ENCODE measurements at regions of chr3 and their contacts with region 1.

Region 1: DNA sequence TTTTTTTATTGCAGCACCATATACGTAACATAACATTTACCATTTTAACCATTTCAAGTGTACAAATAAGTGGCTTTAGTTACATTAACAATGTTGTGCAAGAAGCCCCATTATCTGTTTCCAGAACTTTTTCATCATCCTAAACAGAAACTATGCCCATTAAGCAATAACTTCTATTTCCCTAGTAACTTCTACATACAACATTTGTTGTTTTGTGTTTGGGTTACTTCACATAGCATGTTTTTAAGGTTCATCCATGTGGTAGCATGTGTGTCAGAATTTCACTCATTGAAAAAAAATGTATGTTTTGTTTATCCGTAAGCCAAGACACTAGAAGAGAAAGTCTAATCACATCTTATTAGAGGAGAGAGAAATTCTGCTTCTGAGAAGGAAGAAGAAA is 450.5 kb upstream of the PDZRN3 start:
- DNase-seq: no peak
- ATAC-seq: no peak
- H3K4me3 ChIP-seq: no peak overlapping the region
- H3K27ac ChIP-seq: no peak overlapping the region
- H3K4me1 ChIP-seq: no peaks in the 10 kb centered on the region
- H3K27me3 ChIP-seq: no peaks in the 10 kb centered on the region
- CTCF ChIP-seq: no peak
- EP300 ChIP-seq: no peak
- POLR2A ChIP-seq: no peak
- RAD21 ChIP-seq: no peak

Region 2: GRCh38 chr3:73206022-73206421 is 869.2 kb before region 1 on chr3:
- CTCF ChIA-PET with region 1: no interaction called
- POLR2A ChIA-PET with region 1: no interaction called
- RAD21 ChIA-PET with region 1: no interaction called
- SMC1A ChIA-PET with region 1: no interaction called
- in situ Hi-C with region 1: no loop called
- intact Hi-C with region 1: loop called (anchors 5 kb)
- DNase-seq: no peak
- ATAC-seq: no peak
- H3K4me3 ChIP-seq: no peak overlapping the region
- H3K27ac ChIP-seq: no peak overlapping the region
- H3K4me1 ChIP-seq: no peaks in the 10 kb centered on the region
- H3K27me3 ChIP-seq: peaks cover 0 to under 1% of the 10 kb centered on the region in 2 experiments; a peak in 2 of 4 replicates
- CTCF ChIP-seq: no peak
- EP300 ChIP-seq: no peak
- POLR2A ChIP-seq: no peak
- RAD21 ChIP-seq: no peak

Region 3: DNA sequence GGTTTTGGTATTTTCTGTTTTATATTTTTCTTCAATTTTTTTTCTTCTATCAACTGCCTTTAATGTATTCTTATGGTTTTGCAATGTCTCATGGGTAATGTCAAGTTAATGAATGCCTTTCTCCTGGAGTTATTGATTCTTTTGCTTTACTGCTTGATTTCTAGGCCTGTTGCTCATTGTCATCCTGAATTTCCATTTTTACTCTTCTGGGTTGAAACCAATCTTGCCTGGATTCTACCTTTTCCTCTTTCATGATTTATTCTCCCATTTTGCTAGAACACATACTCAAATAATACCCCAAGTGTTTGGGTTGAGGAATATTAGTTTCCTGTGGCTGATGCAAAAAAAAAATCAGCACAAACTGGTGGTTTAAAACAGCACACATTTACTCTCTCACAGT is 135.3 kb before region 1 on chr3:
- CTCF ChIA-PET with region 1: no interaction called
- POLR2A ChIA-PET with region 1: no interaction called
- RAD21 ChIA-PET with region 1: no interaction called
- SMC1A ChIA-PET with region 1: no interaction called
- in situ Hi-C with region 1: no loop called
- intact Hi-C with region 1: no loop called
- DNase-seq: no peak
- ATAC-seq: no peak
- H3K4me3 ChIP-seq: no peak overlapping the region
- H3K27ac ChIP-seq: no peak overlapping the region
- H3K4me1 ChIP-seq: no peaks in the 10 kb centered on the region
- H3K27me3 ChIP-seq: no peaks in the 10 kb centered on the region
- CTCF ChIP-seq: no peak
- EP300 ChIP-seq: no peak
- POLR2A ChIP-seq: no peak
- RAD21 ChIP-seq: no peak

Measured in GM12878 (cell line).